Activated naive CD4-positive, alpha-beta T cell treated with anti-CD3 and anti-CD28 coated beads for 36 hours (primary cell): ENCODE measurements at regions of chr1 and their contacts with region 1.

Region 1: GRCh38 chr1:62436466-62437256 is at the start of gene USP1:
- DNase-seq: peak; percentile 99
- H3K4me3 Mint-ChIP-seq: peak within 1 kb of the TSS; percentile 82
- H3K27ac Mint-ChIP-seq: peak within 1 kb of the TSS; percentile 99
- H3K4me1 Mint-ChIP-seq: peaks cover 30% of the 10 kb centered on the region
- H3K27me3 Mint-ChIP-seq: no peaks in the 10 kb centered on the region
- total RNA-seq, gene USP1: 65.9 to 67.1 TPM

Region 2: DNA sequence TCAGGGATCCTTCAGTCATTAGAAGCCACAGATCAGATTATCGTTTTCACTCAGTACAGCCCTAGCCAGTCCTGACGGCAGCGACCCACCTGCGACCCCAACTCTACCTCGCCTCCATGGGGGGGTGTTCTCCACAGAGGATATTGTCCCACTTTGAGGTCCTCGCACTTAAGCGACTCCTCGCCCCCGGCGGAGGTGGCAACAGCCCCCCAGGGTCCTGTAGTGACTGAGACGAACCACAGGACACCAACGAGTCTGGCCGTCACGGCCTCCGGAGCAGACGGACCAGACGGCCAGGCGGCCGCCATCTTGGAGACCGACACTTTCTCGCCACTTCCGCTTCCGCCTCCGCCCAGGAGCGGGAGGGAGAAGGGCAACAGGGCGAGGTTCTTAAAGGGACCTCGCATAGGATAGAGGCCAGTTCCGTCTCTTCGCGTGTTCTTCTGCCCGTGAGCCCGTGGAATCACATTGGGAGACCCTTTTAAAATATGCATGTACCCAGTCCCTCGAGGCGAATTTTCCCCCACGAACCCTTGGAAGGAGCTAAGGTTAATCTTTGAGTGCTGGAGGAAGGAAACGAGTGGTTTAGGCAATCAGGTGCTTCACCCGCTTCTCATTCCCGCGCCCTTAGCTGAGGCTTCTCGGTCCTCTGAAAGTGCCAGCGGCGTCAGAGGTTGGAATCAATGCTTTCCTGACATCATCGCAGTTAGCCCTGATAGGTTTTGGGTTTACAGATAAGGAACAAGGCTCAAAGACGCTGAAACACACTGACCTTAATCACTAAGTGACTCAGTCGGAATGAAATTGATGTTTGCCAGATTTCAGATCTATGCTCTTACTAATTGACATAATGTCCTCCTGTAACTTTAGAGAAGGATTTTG is 711.6 kb before region 1 on chr1 and contains the start of gene TM2D1:
- CTCF ChIA-PET with region 1: no interaction called
- intact Hi-C with region 1: loop called (anchors 1 kb)
- DNase-seq: peak; percentile 91
- H3K4me3 Mint-ChIP-seq: peak within 1 kb of the TSS; percentile 96
- H3K27ac Mint-ChIP-seq: peak within 1 kb of the TSS; percentile 99
- H3K4me1 Mint-ChIP-seq: peaks cover 20% of the 10 kb centered on the region
- H3K27me3 Mint-ChIP-seq: no peaks in the 10 kb centered on the region
- total RNA-seq, gene TM2D1: 28.2 to 30.9 TPM

Region 3: DNA sequence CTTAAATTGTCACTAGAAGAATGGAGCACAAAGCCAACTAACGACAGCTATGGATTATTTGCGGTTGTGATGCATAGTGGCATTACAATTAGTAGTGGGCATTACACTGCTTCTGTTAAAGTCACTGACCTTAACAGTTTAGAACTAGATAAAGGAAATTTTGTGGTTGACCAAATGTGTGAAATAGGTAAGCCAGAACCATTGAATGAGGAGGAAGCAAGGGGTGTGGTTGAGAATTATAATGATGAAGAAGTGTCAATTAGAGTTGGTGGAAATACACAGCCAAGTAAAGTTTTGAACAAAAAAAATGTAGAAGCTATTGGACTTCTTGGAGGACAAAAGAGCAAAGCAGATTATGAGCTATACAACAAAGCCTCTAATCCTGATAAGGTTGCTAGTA is 13.6 kb after region 1 on chr1:
- CTCF ChIA-PET with region 1: no interaction called
- intact Hi-C with region 1: loop called (anchors 1 kb)
- DNase-seq: no peak
- H3K4me3 Mint-ChIP-seq: no peak overlapping the region
- H3K27ac Mint-ChIP-seq: no peak overlapping the region
- H3K4me1 Mint-ChIP-seq: peaks cover 14% of the 10 kb centered on the region
- H3K27me3 Mint-ChIP-seq: no peaks in the 10 kb centered on the region

Region 4: GRCh38 chr1:62783723-62784508 is 347.3 kb after region 1 on chr1 and contains the start of gene ATG4C:
- CTCF ChIA-PET with region 1: no interaction called
- intact Hi-C with region 1: loop called (anchors 1 kb)
- DNase-seq: peak; percentile 96
- H3K4me3 Mint-ChIP-seq: no peak within 1 kb of the TSS
- H3K27ac Mint-ChIP-seq: no peak within 1 kb of the TSS
- H3K4me1 Mint-ChIP-seq: peaks cover 13% of the 10 kb centered on the region
- H3K27me3 Mint-ChIP-seq: peaks cover 7% of the 10 kb centered on the region
- total RNA-seq, gene ATG4C: 13.4 to 15.1 TPM

Region 5: GRCh38 chr1:63367215-63368103 is 930.8 kb after region 1 on chr1 and contains the start of gene ALG6:
- CTCF ChIA-PET with region 1: no interaction called
- intact Hi-C with region 1: loop called (anchors 2 kb)
- DNase-seq: peak; percentile 91
- H3K4me3 Mint-ChIP-seq: peak within 1 kb of the TSS; percentile 83
- H3K27ac Mint-ChIP-seq: peak within 1 kb of the TSS; percentile 65
- H3K4me1 Mint-ChIP-seq: peaks cover 21% of the 10 kb centered on the region
- H3K27me3 Mint-ChIP-seq: peaks cover 3% of the 10 kb centered on the region
- total RNA-seq, gene ALG6: 11.0 to 13.5 TPM